ENCODE measurements at regions of chr4 and their contacts with region 1.

Region 1: DNA sequence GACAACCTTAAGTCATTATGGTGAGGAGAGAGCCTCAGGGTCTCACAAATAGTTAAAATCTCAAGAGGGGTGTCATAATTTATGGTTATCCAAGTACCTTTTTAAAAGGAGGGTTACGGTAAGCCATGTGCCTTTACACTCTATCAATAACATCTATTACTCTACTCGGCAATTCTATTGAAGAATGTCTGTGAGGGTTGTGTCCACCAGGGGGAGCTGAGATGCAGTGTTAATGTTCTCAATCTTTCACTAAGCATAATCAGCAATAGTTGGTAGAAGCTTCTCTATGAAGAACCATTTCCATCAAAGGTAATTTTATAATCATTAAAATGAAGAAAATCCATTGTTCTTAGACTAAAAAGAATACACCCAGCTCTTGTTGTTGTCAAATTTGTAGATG is 457.4 kb downstream of the CENPC start:
- DNase-seq: peak; percentile 52
- H3K4me3 Mint-ChIP-seq: no peak overlapping the region
- H3K27ac Mint-ChIP-seq: no peak overlapping the region
- H3K4me1 Mint-ChIP-seq: no peaks in the 10 kb centered on the region
- H3K27me3 Mint-ChIP-seq: no peaks in the 10 kb centered on the region

Region 2: DNA sequence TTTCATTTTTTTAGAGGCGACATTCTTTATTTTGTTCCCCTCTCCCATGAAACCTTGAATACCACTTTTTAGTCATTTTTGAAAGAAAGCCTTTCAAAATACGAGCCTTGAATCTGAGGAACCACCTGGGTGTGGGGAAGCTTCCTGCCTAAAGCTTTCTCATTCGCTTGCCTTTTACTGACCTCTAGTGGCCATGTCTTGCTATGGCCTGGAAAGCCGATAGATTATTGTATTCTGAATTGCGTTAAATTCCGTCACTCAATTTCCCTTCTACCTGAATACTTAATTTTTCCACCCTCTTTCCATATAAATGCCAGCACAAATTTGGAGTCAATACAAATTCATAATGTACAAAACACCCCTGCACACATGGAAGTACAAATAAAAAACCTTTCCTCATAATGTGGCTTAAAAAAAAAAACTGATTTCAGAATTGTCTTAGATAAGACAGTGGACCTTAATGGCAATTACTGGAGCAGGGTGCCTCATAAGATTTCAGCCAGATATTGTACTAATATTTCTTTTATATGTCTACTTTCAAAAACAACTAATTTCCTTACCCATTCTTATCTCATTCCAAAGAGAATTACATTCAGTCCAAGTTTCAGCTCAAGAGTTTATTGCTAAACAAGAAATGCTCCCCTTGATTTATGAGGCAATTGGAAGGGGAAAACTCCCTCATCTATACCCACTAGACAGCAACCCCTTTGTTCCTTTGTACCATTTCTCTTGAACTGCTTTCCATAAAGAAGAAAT is 239.5 kb after region 1 on chr4:
- CTCF ChIA-PET with region 1: interaction called, 15 read pairs
- POLR2A ChIA-PET with region 1: no interaction called
- intact Hi-C with region 1: loop called (anchors 1 kb)
- DNase-seq: peak; percentile 47
- H3K4me3 Mint-ChIP-seq: no peak overlapping the region
- H3K27ac Mint-ChIP-seq: no peak overlapping the region
- H3K4me1 Mint-ChIP-seq: no peaks in the 10 kb centered on the region
- H3K27me3 Mint-ChIP-seq: peaks cover 9% of the 10 kb centered on the region

Region 3: GRCh38 chr4:67437974-67438713 is 350.2 kb after region 1 on chr4:
- CTCF ChIA-PET with region 1: no interaction called
- POLR2A ChIA-PET with region 1: no interaction called
- intact Hi-C with region 1: no loop called
- DNase-seq: no peak
- H3K4me3 Mint-ChIP-seq: no peak overlapping the region
- H3K27ac Mint-ChIP-seq: no peak overlapping the region
- H3K4me1 Mint-ChIP-seq: no peaks in the 10 kb centered on the region
- H3K27me3 Mint-ChIP-seq: no peaks in the 10 kb centered on the region